AG04449 (cell line): ENCODE measurements at regions of chr3 and their contacts with region 1.

Region 1: DNA sequence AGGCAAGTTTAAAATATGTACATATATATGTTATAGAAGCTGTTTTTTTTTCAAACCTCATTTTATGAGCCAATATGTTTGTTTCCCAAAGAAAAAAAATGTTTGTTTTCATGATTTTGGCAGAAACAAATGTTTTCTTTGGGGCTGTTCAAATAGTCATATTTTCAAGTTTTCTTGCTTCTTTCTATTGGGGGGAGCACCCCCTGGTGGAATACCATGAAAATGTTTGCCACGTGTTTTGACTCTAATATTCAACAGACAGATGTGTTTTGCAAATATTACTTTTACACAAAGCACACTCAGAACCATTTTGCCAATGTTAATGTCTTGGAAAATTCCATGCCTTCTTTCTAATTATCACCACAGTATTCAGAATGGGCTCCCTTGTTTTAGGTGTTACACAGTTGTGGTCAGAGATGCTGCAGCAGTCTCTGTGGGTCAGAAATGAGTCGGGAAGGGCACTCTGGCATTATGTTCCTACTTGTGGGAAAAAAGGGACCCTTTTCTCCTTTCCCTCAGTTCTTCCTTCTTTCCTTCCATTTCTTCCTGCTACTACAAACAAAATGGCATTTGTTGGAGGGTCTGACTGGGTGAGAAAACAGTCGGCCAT is 817.0 kb downstream of the TUSC7 start:
- DNase-seq: no peak
- H3K4me3 ChIP-seq: no peak overlapping the region
- CTCF ChIP-seq: peak; percentile 36

Region 2: GRCh38 chr3:116770815-116771450 is 755.6 kb before region 1 on chr3:
- CTCF ChIA-PET with region 1: interaction called, 25 read pairs
- POLR2A ChIA-PET with region 1: no interaction called
- DNase-seq: peak; percentile 17
- H3K4me3 ChIP-seq: no peak overlapping the region
- CTCF ChIP-seq: peak; percentile 90

Region 3: GRCh38 chr3:117019082-117019713 is 507.4 kb before region 1 on chr3:
- CTCF ChIA-PET with region 1: interaction called, 30 read pairs
- POLR2A ChIA-PET with region 1: no interaction called
- DNase-seq: peak; percentile 28
- H3K4me3 ChIP-seq: no peak overlapping the region
- CTCF ChIP-seq: peak; percentile 80

Region 4: GRCh38 chr3:117059067-117059955 is 467.3 kb before region 1 on chr3:
- CTCF ChIA-PET with region 1: interaction called, 13 read pairs
- POLR2A ChIA-PET with region 1: no interaction called
- DNase-seq: no peak
- H3K4me3 ChIP-seq: no peak overlapping the region
- CTCF ChIP-seq: peak; percentile 3

Region 5: GRCh38 chr3:117103675-117104074 is 422.9 kb before region 1 on chr3:
- CTCF ChIA-PET with region 1: no interaction called
- POLR2A ChIA-PET with region 1: no interaction called
- DNase-seq: no peak
- H3K4me3 ChIP-seq: no peak overlapping the region
- CTCF ChIP-seq: no peak

Region 6: GRCh38 chr3:117433427-117433826 is 93.1 kb before region 1 on chr3:
- CTCF ChIA-PET with region 1: no interaction called
- POLR2A ChIA-PET with region 1: no interaction called
- DNase-seq: no peak
- H3K4me3 ChIP-seq: no peak overlapping the region
- CTCF ChIP-seq: no peak

Region 7: DNA sequence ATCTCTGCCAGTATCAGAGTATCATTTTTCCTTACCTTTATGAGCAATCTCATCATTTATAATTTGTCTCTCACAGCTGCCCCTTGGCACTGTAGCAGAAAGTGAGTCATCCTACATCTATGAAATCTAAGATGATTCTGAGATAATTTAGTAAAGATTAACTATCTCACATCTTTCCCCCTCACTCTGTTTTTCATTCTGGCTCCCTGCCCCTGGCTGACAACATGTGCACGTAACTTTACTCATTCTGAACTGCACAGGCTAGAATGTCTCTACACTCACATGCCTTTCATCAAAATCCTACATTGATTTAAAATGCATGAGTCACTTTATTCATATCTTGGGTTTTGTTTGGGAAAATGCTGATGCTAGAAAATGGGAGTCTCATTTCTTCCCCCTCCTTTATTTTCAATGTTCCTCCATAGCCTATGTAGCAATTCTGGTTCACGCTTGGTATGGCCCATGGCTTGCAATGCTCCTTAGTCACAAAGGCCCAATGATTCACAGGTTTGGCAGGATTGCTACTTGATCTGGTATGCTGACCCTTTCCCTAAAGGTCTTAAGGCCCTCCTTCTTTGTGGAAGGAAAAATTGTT is 21.5 kb after region 1 on chr3:
- CTCF ChIA-PET with region 1: interaction called, 11 read pairs
- POLR2A ChIA-PET with region 1: no interaction called
- DNase-seq: peak; percentile 29
- H3K4me3 ChIP-seq: no peak overlapping the region
- CTCF ChIP-seq: no peak

Region 8: GRCh38 chr3:117671722-117672318 is 145.2 kb after region 1 on chr3:
- CTCF ChIA-PET with region 1: no interaction called
- POLR2A ChIA-PET with region 1: no interaction called
- DNase-seq: no peak
- H3K4me3 ChIP-seq: no peak overlapping the region
- CTCF ChIP-seq: no peak

Region 9: DNA sequence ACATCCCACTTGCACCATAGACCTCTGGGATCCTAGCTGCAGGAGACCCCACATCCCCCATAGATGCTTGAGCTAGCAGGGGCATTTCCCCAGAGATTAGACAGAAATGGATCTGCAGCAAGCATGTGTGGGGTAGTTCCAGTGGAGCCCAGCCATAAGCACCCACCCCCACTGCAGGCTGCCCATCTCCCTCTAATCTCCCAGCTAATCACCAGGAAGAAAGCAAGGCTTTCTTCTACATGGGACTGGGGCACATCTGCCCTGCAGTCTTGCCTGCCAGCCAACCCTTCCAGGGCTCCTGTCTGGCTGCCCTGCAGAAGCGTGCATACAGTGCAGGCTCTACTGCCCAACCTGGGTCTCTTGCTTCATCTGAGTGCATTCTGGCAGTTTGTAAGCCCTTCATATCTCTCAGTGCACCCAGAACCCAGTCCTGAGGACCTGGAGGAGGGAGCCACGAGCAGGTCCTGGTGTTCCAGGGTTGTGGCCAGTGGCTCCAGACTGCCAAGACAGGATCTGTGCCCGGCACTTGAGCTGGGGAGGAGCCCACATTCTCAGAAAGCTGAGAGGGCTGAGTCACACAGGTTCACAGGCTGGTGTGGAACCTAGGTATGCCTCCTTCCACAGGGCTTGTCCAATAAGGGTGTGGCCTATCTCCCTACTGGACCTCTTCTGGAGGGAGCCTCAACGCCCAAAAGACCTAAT is 1557.9 kb after region 1 on chr3:
- CTCF ChIA-PET with region 1: no interaction called
- POLR2A ChIA-PET with region 1: no interaction called
- DNase-seq: no peak
- H3K4me3 ChIP-seq: no peak overlapping the region
- CTCF ChIP-seq: no peak